Heart right ventricle (tissue), 16 donors: ENCODE measurements at regions of chr14 and their contacts with region 1.

Region 1: DNA sequence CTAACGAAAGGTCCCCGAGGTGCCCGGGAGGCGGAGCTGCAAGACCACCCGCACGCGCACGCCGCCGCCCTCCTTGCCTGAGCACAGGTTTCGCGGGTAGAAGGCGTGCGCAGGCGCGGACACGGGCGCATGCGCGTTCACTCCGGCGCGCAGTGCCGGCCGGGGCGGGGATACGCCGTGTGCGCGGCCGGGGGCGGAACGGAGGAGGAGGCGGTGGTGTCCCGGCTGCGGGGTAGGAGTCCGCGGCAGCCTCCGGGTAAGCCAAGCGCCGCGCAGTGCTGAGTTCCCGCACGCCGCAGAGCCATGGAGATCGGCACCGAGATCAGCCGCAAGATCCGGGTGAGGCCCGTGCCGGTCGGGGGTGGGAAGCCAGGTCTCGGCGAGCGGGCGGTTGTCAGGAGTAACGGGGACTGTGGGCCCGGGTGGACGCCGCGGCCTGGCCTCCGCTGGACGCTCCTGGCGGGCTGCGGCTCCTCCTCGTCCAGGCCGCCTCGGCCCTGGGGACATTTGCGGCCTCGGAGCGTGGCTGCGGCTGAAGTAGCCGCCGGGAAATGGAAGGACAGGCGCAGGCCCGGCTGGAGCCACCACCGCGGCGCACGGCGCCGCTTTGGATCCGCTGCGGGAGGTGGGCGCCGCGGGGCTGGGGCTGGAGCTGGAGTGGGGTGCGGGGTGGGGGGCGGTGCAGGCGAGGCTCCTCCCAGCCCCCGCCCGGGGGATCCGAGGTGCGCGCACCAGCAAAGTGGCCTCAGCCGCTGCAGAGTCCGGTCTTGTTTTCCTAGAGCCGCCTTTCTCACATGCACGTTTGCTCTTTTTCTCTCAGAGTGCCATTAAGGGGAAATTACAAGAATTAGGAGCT is at the start of gene ZC3H14:
- DNase-seq: peak; percentile 82 to 91
- ATAC-seq: peak; percentile 98 to 99 (median 98)
- H3K4me3 ChIP-seq: peak within 1 kb of the TSS; percentile 69 to 98 (median 87)
- H3K27ac ChIP-seq: peak within 1 kb of the TSS; percentile 76 to 97 (median 94)
- H3K4me1 ChIP-seq: peaks cover 2 to 24% (median 21%) of the 10 kb centered on the region in 9 donors
- H3K27me3 ChIP-seq: no peaks in the 10 kb centered on the region
- CTCF ChIP-seq: no peak
- total RNA-seq, gene ZC3H14: 35.4 to 49.4 (median 38.7) TPM

Region 2: GRCh38 chr14:88013750-88014349 is 549.2 kb before region 1 on chr14:
- intact Hi-C with region 1: loop called in 1 of 10 experiments (anchors 5 kb)
- DNase-seq: peak; percentile 23 to 69
- ATAC-seq: peak; percentile 72 to 94 (median 90)
- H3K4me3 ChIP-seq: no peak overlapping the region
- H3K27ac ChIP-seq: peak overlapping the region in 1 of 10 donors; percentile 46
- H3K4me1 ChIP-seq: peaks cover 0 to 63% (median 0%) of the 10 kb centered on the region in 9 donors
- H3K27me3 ChIP-seq: no peaks in the 10 kb centered on the region
- CTCF ChIP-seq: peak; percentile 79 to 95 (median 89)

Region 3: DNA sequence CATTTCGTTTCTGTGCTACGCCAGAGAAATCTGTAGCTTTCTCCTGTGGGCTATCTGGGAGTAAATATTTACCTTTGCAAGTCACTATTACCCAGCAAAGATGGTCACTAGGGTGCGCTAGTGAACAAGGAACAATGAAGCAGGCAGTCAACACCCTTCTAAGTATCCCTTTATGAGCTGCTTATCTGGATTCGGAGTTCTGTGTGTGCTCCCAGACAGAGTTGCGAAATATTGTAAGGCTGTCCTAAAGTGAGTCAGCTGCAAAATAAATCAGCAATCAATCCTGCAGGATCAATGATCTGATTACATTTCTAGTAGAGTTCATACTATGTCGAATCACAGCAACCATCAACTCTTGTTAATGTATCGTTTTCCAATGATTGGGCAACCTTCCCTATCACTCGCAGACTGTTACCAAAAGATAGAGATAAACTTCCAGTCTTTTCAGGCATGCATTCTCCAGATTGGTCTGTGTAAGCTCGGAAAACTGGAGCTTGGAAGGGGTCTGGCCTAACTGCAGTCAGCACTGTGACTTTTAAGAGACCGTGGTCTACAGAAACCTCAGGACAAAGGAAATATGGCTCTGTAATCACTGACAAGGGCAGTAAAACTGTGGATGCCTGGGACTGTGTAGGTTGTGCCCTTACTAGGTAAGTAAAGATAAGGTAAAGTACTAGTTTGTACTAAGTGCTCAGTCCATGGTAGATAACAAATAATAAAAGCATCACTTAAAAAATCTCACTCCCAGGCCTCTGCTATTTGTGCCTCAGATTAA is 373.5 kb before region 1 on chr14:
- intact Hi-C with region 1: loop called in 1 of 10 experiments (anchors 5 kb)
- DNase-seq: peak in 1 of 2 donors; percentile 78
- ATAC-seq: peak; percentile 86 to 95 (median 93)
- H3K4me3 ChIP-seq: peak overlapping the region in 6 of 10 donors; percentile 19 to 38 (median 30)
- H3K27ac ChIP-seq: no peak overlapping the region
- H3K4me1 ChIP-seq: peaks cover 0 to 14% (median 3%) of the 10 kb centered on the region in 9 donors
- H3K27me3 ChIP-seq: peaks cover 0 to 34% (median 25%) of the 10 kb centered on the region in 7 donors
- CTCF ChIP-seq: peak; percentile 26 to 78 (median 71)

Region 4: GRCh38 chr14:88492272-88493089 is 70.6 kb before region 1 on chr14:
- intact Hi-C with region 1: loop called in 7 of 10 experiments (anchors 2 to 5 kb)
- DNase-seq: peak in 1 of 2 donors; percentile 80
- ATAC-seq: peak; percentile 53 to 85 (median 78)
- H3K4me3 ChIP-seq: no peak overlapping the region
- H3K27ac ChIP-seq: peak overlapping the region in 7 of 10 donors; percentile 14 to 63 (median 53)
- H3K4me1 ChIP-seq: peaks cover 0 to 21% (median 11%) of the 10 kb centered on the region in 9 donors
- H3K27me3 ChIP-seq: no peaks in the 10 kb centered on the region
- CTCF ChIP-seq: peak; percentile 86 to 96 (median 93)